ENCODE measurements at regions of chr9 and their contacts with region 1.

Region 1: DNA sequence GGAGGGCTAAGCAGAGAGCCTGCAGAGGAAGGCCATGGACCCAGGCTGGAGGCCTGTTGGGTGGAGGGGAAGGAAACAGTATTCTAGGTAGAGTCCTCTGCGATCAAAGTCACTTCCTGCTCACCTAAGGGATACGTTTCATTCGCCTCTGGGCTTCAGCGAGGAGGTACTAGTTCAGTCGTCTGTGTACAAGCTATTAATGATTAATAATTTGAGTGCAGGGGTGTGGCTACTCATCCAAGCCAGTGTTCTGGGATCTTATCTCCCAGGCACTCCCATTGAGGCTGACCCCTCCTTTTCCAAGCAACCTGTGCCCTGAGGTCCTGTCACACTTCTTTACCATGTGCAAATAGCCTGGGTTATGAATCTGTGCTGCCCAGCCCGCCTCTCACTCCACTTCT is 25.2 kb downstream of the RALGPS1 start:
- DNase-seq: no peak
- ATAC-seq: no peak
- H3K4me3 Mint-ChIP-seq: no peak overlapping the region
- H3K27ac Mint-ChIP-seq: no peak overlapping the region
- H3K4me1 Mint-ChIP-seq: peaks cover 12% of the 10 kb centered on the region
- H3K27me3 Mint-ChIP-seq: peaks cover 26% of the 10 kb centered on the region

Region 2: DNA sequence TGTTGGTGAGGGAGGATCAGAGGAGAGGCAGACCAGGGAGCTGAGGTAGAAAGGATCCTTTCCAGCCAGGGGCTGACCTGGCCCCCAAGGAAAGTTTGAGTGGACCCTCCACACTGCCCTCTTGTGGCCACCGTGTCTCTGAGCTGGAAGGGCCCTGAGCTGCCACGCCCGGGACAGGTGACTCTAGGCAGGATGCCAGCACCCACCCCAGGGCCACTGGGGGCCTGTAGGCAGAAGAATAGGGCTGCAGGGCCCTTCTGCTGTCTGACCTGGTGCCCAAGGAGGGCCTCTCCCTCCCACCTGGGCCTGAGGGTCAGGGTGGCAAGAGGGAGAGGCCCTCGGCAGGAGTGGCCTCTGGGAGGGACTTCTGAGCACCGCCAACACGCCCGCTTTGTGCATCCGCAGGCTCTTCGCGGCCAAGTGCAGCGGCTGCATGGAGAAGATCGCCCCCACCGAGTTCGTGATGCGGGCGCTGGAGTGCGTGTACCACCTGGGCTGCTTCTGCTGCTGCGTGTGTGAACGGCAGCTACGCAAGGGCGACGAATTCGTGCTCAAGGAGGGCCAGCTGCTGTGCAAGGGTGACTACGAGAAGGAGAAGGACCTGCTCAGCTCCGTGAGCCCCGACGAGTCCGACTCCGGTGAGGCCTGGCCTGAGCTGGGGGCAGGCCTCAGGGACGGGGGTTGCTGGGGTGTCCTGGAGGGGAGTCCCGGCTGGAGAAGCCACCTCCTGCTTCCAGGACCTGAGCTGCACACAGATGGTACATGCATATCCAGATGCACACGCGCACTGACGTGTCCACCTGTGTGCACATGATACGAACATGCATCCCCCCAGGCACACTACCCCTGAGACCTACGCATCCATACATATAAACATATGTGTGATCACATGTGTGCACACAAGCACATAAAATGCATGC is 249.1 kb before region 1 on chr9:
- CTCF ChIA-PET with region 1: no interaction called
- POLR2A ChIA-PET with region 1: no interaction called
- DNase-seq: peak; percentile 75
- ATAC-seq: peak; percentile 80
- H3K4me3 Mint-ChIP-seq: no peak overlapping the region
- H3K27ac Mint-ChIP-seq: no peak overlapping the region
- H3K4me1 Mint-ChIP-seq: no peaks in the 10 kb centered on the region
- H3K27me3 Mint-ChIP-seq: peaks cover 12% of the 10 kb centered on the region

Region 3: DNA sequence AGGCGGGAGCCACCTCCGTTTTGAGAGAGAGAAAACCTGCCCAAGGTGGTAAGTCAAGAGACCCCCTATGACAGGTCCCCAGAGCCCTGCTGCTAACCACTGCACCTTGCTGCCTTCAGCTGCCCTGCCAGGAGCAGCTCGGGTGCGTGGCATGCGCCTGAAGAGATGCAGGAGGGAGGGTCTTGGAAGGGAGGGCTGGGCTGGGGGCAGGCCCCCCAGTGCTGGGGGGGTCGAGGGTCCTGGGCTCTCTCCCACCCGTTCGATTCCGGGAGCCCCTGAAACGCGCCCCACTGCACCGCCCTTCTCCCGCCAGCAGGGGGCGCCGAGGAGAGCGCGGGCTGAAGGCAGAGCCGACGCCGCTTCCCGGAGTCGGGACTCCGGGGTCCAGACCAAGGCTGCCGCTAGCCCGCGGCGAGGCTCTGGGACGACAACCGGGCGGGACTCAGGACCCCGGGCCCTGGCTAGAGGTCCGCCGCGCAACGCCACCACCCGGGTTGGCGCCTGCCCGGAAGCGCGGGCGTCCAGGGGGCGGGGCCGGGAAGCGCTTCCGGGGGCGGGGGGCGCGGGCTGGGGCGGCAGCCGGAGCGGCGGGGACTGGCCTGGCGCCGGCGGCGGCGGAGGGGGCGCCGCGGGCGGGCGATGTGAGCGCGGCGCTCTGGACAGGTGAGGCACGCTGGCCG is 79.6 kb before region 1 on chr9 and contains the start of gene ZBTB34:
- CTCF ChIA-PET with region 1: no interaction called
- POLR2A ChIA-PET with region 1: no interaction called
- DNase-seq: peak; percentile 80
- ATAC-seq: peak; percentile 75
- H3K4me3 Mint-ChIP-seq: peak within 1 kb of the TSS; percentile 80
- H3K27ac Mint-ChIP-seq: peak within 1 kb of the TSS; percentile 88
- H3K4me1 Mint-ChIP-seq: peaks cover 31% of the 10 kb centered on the region
- H3K27me3 Mint-ChIP-seq: peaks cover 8% of the 10 kb centered on the region
- total RNA-seq, gene ZBTB34: 7.7 to 8.1 TPM

Region 4: GRCh38 chr9:126925876-126926275 is 13.9 kb before region 1 on chr9:
- CTCF ChIA-PET with region 1: interaction called, 11 read pairs
- POLR2A ChIA-PET with region 1: no interaction called
- DNase-seq: no peak
- ATAC-seq: no peak
- H3K4me3 Mint-ChIP-seq: no peak overlapping the region
- H3K27ac Mint-ChIP-seq: no peak overlapping the region
- H3K4me1 Mint-ChIP-seq: no peaks in the 10 kb centered on the region
- H3K27me3 Mint-ChIP-seq: peaks cover 3% of the 10 kb centered on the region

Region 5: GRCh38 chr9:126965541-126966428 is 26.0 kb after region 1 on chr9:
- CTCF ChIA-PET with region 1: interaction called, 21 read pairs
- POLR2A ChIA-PET with region 1: no interaction called
- DNase-seq: peak; percentile 65
- ATAC-seq: peak; percentile 67
- H3K4me3 Mint-ChIP-seq: no peak overlapping the region
- H3K27ac Mint-ChIP-seq: no peak overlapping the region
- H3K4me1 Mint-ChIP-seq: peaks cover 4% of the 10 kb centered on the region
- H3K27me3 Mint-ChIP-seq: peaks cover 11% of the 10 kb centered on the region

Region 6: DNA sequence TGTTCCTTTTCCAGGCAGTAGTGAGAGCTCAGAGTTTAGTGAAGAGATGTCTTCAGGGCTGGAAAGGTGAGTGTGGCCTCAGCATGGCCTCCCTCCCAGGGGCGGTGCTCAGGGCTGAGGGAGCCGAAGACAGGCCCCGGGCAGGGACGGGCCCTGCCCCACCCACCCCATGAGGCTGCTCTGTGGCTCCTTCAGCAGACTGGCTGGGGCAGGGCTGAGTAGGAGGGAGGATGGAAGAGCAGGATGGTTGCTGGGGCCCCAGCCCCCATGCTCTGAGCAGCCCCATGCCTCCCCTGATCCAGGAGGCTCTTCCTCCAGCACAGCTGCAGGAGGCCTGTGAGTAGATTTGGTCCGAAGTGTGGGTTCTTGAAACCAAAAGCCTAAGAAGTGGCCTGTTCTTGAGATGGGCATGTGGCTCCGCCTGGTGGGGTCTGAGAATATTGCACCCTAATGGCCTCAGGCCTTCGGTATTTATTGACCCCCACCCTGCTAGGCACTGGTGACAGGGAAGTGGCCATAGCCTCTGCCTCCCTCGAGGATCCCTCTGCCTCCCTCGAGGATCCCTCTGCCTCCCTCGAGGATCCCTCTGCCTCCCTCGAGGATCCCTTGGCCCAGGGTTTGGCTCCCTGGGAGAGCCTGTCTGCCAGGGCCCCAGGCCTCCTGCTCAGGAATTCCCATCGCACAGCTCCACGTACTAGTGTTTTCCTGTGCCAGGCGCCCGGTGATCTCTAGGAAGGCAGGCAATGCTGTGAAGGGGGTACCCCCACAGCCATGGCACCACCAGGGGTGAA is 259.4 kb after region 1 on chr9:
- CTCF ChIA-PET with region 1: interaction called, 87 read pairs
- POLR2A ChIA-PET with region 1: no interaction called
- DNase-seq: peak; percentile 84
- ATAC-seq: peak; percentile 77
- H3K4me3 Mint-ChIP-seq: no peak overlapping the region
- H3K27ac Mint-ChIP-seq: no peak overlapping the region
- H3K4me1 Mint-ChIP-seq: peaks cover 7% of the 10 kb centered on the region
- H3K27me3 Mint-ChIP-seq: peaks cover 2% of the 10 kb centered on the region

Measured in activated CD8-positive, alpha-beta T cell treated with anti-CD3 and anti-CD28 coated beads, Interleukin-2, amount 10 ng/mL, durations not matched to agents 7 days and 5 days (primary cell).